HCT116 (cell line): ENCODE measurements at regions of chr16 and their contacts with region 1.

Region 1: DNA sequence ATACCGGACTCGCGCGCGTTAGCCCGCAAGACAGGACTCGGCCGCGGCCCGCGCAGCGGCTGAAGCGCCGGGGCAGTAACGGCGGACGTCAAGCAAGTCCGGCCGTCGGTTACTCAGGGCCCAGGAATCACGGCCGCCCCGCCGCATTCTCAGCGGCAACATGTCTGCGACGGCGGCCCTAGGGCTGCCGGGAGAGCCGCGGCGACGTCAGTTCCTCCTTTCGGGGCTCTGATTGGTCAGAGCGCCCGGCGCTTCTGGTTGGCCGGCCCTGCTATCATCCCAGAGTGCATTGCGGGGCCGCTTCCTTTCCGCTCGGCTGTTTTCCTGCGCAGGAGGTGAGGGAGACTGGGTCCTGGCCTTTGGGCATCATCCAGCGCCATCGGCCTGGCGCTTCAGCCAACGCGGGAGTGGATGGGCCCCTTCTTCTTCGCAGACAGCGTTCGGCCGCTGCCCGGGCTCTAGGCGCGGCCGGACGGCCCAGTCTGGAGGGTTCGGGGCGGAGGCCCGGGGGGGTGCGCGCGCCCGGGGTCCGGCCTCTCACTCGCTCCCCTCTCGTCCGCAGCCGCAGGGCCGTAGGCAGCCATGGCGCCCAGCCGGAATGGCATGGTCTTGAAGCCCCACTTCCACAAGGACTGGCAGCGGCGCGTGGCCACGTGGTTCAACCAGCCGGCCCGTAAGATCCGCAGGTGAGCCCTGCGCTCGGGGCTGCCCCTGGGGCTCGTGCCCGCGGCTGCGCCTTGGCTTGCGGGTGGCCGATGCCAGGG is at the start of gene RPL13:
- DNase-seq: peak; percentile 93
- ATAC-seq: peak; percentile 61
- H3K4me3 ChIP-seq: peak within 1 kb of the TSS; percentile 83 to 89
- H3K27ac ChIP-seq: peak within 1 kb of the TSS; percentile 96
- H3K4me1 ChIP-seq: peaks cover 51 to 68% of the 10 kb centered on the region in 2 experiments
- H3K27me3 ChIP-seq: no peaks in the 10 kb centered on the region
- CTCF ChIP-seq: no peak
- POLR2A ChIP-seq: peak; percentile 98
- RAD21 ChIP-seq: no peak
- total RNA-seq, gene RPL13: 4,404 TPM

Region 2: GRCh38 chr16:88811769-88812512 is 748.6 kb before region 1 on chr16 and contains the start of gene APRT:
- CTCF ChIA-PET with region 1: no interaction called
- POLR2A ChIA-PET with region 1: no interaction called
- RAD21 ChIA-PET with region 1: no interaction called
- intact Hi-C with region 1: loop called (anchors 10 kb)
- DNase-seq: peak; percentile 91
- ATAC-seq: peak; percentile 64
- H3K4me3 ChIP-seq: peak within 1 kb of the TSS; percentile 72 to 75
- H3K27ac ChIP-seq: peak within 1 kb of the TSS; percentile 100
- H3K4me1 ChIP-seq: peaks cover 22 to 59% of the 10 kb centered on the region in 2 experiments
- H3K27me3 ChIP-seq: no peaks in the 10 kb centered on the region
- CTCF ChIP-seq: peak in 2 of 3 experiments; percentile 35; a peak in 4 of 6 replicates
- POLR2A ChIP-seq: peak; percentile 77
- RAD21 ChIP-seq: no peak
- total RNA-seq, gene APRT: 311 TPM

Region 3: GRCh38 chr16:89241187-89242007 is 319.2 kb before region 1 on chr16:
- CTCF ChIA-PET with region 1: no interaction called
- POLR2A ChIA-PET with region 1: no interaction called
- RAD21 ChIA-PET with region 1: no interaction called
- intact Hi-C with region 1: loop called (anchors 2 kb)
- DNase-seq: peak; percentile 79
- ATAC-seq: peak; percentile 75
- H3K4me3 ChIP-seq: peak overlapping the region; percentile 88 to 91
- H3K27ac ChIP-seq: peak overlapping the region; percentile 83
- H3K4me1 ChIP-seq: peaks cover 1 to 10% of the 10 kb centered on the region in 2 experiments; a peak in 3 of 4 replicates
- H3K27me3 ChIP-seq: no peaks in the 10 kb centered on the region
- CTCF ChIP-seq: no peak
- POLR2A ChIP-seq: peak; percentile 93
- RAD21 ChIP-seq: no peak

Region 4: GRCh38 chr16:89325861-89326471 is 234.6 kb before region 1 on chr16:
- CTCF ChIA-PET with region 1: no interaction called
- POLR2A ChIA-PET with region 1: interaction called, 5 read pairs
- RAD21 ChIA-PET with region 1: no interaction called
- intact Hi-C with region 1: loop called (anchors 1 kb)
- DNase-seq: no peak
- ATAC-seq: no peak
- H3K4me3 ChIP-seq: peak overlapping the region; percentile 5 to 31; a peak in 2 of 4 replicates
- H3K27ac ChIP-seq: peak overlapping the region; percentile 80
- H3K4me1 ChIP-seq: peaks cover 96 to 100% of the 10 kb centered on the region in 2 experiments
- H3K27me3 ChIP-seq: no peaks in the 10 kb centered on the region
- CTCF ChIP-seq: no peak
- POLR2A ChIP-seq: no peak
- RAD21 ChIP-seq: no peak

Region 5: GRCh38 chr16:89490387-89491237 is 69.9 kb before region 1 on chr16 and contains the start of gene ANKRD11:
- CTCF ChIA-PET with region 1: no interaction called
- POLR2A ChIA-PET with region 1: interaction called, 4 read pairs
- RAD21 ChIA-PET with region 1: no interaction called
- intact Hi-C with region 1: loop called (anchors 5 kb)
- DNase-seq: peak; percentile 100
- ATAC-seq: peak; percentile 96
- H3K4me3 ChIP-seq: peak within 1 kb of the TSS; percentile 59 to 74
- H3K27ac ChIP-seq: peak within 1 kb of the TSS; percentile 95
- H3K4me1 ChIP-seq: peaks cover 17 to 44% of the 10 kb centered on the region in 2 experiments
- H3K27me3 ChIP-seq: no peaks in the 10 kb centered on the region
- CTCF ChIP-seq: no peak
- POLR2A ChIP-seq: peak; percentile 49
- RAD21 ChIP-seq: no peak
- total RNA-seq, gene ANKRD11: 266 TPM

Region 6: DNA sequence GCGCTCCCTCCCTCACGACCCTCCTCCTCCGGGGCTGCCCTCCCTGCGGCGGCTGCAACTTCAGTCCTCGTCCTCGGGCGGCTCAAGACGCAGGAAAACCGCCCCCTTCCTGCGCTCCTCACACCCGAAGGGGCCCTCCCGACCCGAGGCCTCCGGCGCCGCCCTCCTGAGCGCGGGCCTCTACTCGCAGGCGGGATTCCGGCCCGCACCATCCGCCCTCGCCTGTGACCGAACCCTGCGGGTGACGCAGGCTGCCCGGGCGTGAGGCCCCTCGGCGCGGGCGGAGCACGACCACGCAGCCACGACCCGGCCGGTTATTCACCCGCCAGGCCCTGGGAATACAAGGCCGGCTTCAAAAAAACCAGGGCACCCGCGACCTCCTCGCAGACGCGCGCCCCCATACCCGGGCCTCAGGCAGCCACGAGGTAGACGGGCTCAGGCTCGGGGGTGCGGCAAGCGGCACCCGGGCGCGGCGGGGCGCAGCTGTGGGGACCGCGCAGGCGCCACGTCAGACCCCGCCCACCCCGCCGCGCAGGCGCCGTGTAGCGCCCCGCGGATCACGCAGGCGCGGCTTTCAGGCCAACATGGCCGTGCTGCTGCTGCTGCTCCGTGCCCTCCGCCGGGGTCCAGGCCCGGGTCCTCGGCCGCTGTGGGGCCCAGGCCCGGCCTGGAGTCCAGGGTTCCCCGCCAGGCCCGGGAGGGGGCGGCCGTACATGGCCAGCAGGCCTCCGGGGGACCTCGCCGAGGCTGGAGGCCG is 52.5 kb before region 1 on chr16 and contains the start of gene SPG7:
- CTCF ChIA-PET with region 1: interaction called, 3 read pairs
- POLR2A ChIA-PET with region 1: interaction called, 4 read pairs
- RAD21 ChIA-PET with region 1: no interaction called
- intact Hi-C with region 1: loop called (anchors 5 kb)
- DNase-seq: peak; percentile 66
- ATAC-seq: peak; percentile 79
- H3K4me3 ChIP-seq: peak within 1 kb of the TSS; percentile 76 to 94
- H3K27ac ChIP-seq: peak within 1 kb of the TSS; percentile 98
- H3K4me1 ChIP-seq: peaks cover 38 to 56% of the 10 kb centered on the region in 2 experiments
- H3K27me3 ChIP-seq: no peaks in the 10 kb centered on the region
- CTCF ChIP-seq: no peak
- POLR2A ChIP-seq: peak; percentile 91
- RAD21 ChIP-seq: no peak
- total RNA-seq, gene SPG7: 116 TPM

Region 7: DNA sequence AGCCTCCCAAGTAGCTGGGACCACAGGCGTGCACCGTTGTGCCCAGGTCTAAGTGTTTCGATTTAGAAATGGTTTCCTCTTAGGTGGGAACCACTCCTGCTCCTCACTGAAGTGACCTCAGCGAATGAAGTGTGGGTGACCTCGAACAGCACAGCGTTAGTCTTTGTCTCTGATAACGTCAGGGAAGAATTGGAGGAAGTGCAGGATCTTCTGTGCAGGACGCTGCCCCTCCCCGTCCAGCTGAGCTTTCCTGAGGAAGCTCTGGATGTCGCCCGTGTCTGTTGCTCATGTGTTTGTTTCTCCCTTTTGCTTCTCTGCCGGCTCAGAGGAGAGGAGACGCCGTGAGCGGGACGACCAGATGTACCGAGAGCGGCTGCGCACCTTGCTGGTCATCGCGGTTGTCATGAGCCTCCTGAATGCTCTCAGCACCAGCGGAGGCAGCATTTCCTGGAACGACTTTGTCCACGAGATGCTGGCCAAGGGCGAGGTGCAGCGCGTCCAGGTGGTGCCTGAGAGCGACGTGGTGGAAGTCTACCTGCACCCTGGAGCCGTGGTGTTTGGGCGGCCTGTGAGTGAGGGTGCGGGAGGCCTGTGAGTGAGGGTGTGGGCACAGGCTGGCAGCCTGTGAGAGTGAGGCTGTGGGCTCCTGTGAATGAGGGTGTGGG is 36.7 kb before region 1 on chr16:
- CTCF ChIA-PET with region 1: no interaction called
- POLR2A ChIA-PET with region 1: no interaction called
- RAD21 ChIA-PET with region 1: no interaction called
- intact Hi-C with region 1: no loop called
- DNase-seq: no peak
- ATAC-seq: no peak
- H3K4me3 ChIP-seq: no peak overlapping the region
- H3K27ac ChIP-seq: no peak overlapping the region
- H3K4me1 ChIP-seq: no peaks in the 10 kb centered on the region
- H3K27me3 ChIP-seq: no peaks in the 10 kb centered on the region
- CTCF ChIP-seq: no peak
- POLR2A ChIP-seq: no peak
- RAD21 ChIP-seq: no peak

Region 8: DNA sequence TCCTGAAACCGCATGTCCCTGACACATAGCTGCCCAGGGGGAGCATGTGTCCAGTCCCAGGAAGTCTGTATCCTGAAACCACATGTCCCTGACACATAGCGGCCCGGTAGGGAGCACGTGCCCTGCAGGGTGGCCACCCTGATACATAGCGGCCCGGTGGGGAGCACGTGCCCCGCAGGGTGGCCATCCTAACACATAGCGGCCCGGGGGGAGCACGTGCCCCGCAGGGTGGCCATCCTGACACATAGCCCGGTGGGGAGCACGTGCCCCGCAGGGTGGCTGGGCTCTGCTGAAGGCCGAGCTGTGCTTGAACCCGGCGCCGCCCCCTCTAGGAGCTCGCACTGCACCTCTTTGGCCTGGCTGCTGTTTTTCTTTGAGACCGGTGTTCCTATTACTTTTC is 18.8 kb before region 1 on chr16:
- CTCF ChIA-PET with region 1: interaction called, 11 read pairs
- POLR2A ChIA-PET with region 1: no interaction called
- RAD21 ChIA-PET with region 1: no interaction called
- intact Hi-C with region 1: no loop called
- DNase-seq: no peak
- ATAC-seq: 0 out of 2 replicates have a peak, but pooled peaks have one; percentile 12
- H3K4me3 ChIP-seq: no peak overlapping the region
- H3K27ac ChIP-seq: no peak overlapping the region
- H3K4me1 ChIP-seq: no peaks in the 10 kb centered on the region
- H3K27me3 ChIP-seq: no peaks in the 10 kb centered on the region
- CTCF ChIP-seq: no peak
- POLR2A ChIP-seq: no peak
- RAD21 ChIP-seq: no peak